Cardiac septum (tissue), 1 donor: ENCODE measurements at regions of chr11 and their contacts with region 1.

Region 1: DNA sequence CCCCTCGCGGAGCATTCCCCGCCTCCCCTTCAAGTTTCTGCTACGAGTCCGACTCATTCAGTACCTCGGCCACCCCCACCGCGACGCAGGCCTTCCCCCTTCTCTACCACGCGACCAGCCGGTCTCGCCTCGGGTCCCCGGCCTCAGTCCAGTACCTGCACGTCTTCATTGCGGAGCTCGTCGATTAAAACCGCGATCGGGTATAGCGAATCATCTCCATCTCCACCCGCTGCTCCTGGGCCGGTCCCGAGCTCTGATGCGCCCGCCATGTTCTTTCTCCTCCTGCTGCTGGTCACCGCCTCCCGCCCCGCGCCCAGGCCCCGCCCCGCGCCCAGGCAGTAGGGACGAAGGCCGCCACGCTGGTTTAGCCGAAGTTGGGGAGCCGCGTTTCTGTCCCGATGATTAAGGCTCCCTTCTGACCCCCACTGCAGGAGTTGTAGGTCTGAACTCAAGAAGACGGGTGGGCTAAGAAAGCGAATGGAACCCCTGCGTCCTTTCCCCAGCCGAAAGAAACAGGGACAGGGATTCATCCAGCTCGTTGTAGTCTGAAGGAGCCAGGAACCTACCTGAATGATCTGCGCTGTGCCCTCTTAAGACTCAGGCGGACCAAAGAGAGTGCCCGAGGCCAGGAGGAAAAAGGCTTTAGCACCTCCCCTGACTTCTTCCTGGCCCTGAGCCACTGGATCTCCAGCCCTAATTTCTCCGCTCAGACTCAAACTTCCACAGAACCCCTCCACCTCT is at the start of gene PPP2R1B:
- DNase-seq: peak; percentile 93
- total RNA-seq, gene PPP2R1B: 12.9 TPM

Region 2: GRCh38 chr11:111586388-111586831 is 179.9 kb before region 1 on chr11:
- intact Hi-C with region 1: no loop called
- DNase-seq: no peak

Region 3: DNA sequence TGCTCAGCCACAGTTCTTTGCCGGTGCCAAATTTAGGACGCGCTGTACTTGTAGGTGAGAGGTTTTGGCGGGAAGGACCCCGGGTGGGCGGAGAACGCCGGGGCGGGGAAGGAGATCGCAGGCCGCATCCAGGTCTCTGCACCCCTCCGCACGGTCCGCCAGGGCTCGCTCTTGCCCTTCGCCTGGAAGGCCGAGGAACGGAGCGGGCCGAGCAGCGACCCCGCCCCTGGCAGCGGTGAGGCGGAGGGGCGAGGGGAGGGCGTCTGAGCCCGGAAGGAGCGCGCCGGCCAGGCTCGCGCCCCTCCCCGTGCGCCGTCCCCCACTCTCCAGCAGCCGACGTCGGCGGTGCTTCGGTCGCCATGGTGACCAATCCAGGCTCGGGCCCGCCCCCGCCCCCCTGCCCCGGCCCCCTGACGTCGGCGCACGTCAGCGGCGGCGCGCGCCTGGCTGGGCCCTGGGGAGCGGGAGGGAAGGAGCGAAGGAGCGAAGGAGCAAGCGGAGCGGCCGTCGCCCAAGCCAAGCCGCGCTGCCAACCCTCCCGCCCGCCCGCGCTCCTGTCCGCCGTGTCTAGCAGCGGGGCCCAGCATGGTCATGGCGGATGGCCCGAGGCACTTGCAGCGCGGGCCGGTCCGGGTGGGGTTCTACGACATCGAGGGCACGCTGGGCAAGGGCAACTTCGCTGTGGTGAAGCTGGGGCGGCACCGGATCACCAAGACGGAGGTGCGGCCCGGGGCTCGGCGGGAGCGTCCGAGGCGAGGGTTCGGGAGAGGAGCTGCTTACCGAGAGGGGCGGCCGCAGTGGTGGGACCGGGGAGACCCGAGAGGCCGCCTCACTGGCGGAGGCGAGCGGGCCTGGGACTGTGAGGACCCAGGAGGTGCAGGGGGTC is 164.0 kb before region 1 on chr11 and contains the start of gene SIK2:
- intact Hi-C with region 1: loop called (anchors 2 kb)
- DNase-seq: peak; percentile 93
- total RNA-seq, gene SIK2: 27.3 TPM

Region 4: DNA sequence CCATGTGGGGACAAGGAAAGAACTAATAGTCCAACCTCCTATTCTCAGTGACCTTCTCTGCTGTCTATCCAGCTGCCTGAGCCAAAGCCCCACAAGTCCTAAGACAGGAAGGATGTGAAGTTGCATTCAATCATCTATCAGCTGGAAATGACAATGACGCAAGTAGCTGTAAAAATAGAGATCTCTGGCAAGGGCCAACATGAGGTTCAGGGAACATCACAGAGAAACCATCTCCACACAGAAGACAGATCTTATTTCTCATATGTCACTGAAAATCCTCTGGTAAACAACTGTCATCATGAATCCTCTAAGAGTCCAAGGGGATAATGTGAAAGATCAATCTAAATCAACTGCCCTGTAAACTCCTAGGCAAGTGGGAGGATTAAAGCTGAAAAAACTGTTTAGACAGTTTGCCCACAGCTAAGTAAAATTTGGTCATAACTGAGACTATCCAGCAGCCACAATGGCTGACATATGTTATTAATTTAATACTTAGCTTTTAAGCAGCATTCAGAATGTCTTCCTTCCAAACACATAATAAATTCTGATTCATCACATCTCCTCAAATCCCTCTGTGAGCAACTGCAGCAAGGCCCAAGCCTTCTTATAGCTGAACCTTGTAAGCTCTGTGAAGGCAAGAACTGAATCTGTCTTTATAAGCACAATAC is 53.0 kb after region 1 on chr11:
- intact Hi-C with region 1: no loop called
- DNase-seq: no peak